Tibial artery (tissue), 4 donors: ENCODE measurements at regions of chr20 and their contacts with region 1.

Region 1: DNA sequence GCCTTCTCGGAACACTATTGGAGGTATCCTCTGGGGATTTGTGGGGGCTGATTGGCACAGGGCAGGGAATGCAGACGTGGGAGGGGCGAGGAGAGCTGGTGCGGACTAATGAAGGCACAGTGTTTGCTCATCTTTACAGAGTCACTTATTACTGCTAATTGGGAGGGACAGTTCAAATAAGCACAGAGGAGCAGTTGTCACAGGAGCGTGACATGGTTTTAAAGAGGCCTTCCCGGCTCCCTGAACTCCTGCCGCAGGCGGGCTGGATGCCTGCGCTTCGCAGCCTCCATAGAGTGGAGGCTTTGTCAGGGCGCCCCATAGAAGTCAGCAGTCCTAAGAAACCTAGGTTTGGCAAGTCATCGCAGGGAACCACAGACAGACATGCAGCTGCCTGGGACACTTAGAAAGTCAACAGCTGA is 149.6 kb downstream of the LINC00237 start:
- DNase-seq: no peak
- H3K4me3 ChIP-seq: no peak overlapping the region
- H3K27ac ChIP-seq: no peak overlapping the region
- H3K4me1 ChIP-seq: no peaks in the 10 kb centered on the region
- H3K27me3 ChIP-seq: peaks cover 0 to 3% of the 10 kb centered on the region in 2 donors
- CTCF ChIP-seq: no peak

Region 2: GRCh38 chr20:20721369-20721888 is 235.1 kb before region 1 on chr20:
- intact Hi-C with region 1: no loop called
- DNase-seq: no peak
- H3K4me3 ChIP-seq: no peak overlapping the region
- H3K27ac ChIP-seq: no peak overlapping the region
- H3K4me1 ChIP-seq: no peaks in the 10 kb centered on the region
- H3K27me3 ChIP-seq: no peaks in the 10 kb centered on the region
- CTCF ChIP-seq: no peak

Region 3: DNA sequence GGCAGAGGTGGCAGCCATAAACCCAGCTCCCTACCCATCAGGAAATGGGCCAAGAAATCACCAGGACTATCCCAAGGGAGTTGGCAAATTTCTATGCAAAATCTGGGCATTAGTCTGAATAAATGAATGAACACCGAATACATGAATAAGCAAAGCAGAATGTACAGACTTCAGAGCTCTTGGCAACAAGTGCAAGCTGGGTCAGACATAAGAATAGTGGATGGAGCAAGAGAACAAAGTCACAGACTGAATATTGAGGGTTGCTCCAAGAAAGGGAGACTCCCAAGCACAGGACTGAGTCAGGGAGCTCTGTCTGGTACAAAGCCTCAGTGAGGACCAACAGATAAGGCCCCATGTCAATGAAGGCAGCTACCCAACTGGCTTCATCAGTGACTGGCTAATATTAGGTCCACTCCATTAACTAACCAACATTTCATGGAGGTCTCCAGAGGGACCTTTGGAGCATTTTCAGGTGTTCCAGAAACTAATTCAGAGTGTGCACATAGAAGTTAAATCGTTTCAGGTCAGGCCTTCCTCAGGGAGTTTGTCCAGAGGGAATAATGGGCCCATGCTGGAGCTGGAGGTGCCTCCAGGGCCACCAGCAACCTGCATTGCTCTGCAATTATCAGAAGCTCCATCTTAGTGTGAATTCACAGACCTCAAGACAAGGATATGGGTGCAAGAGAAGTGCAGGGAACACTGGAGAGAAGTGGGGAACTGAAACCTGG is 52.6 kb before region 1 on chr20:
- intact Hi-C with region 1: loop called (anchors 10 kb)
- DNase-seq: no peak
- H3K4me3 ChIP-seq: no peak overlapping the region
- H3K27ac ChIP-seq: no peak overlapping the region
- H3K4me1 ChIP-seq: no peaks in the 10 kb centered on the region
- H3K27me3 ChIP-seq: no peaks in the 10 kb centered on the region
- CTCF ChIP-seq: no peak